Posterior vena cava (tissue), 2 donors: ENCODE measurements at regions of chr11 and their contacts with region 1.

Region 1: GRCh38 chr11:84524422-84525051 is 1102.6 kb downstream of the DLG2 start:
- DNase-seq: no peak

Region 2: GRCh38 chr11:83836883-83837654 is 687.5 kb before region 1 on chr11:
- intact Hi-C with region 1: loop called (anchors 10 kb)
- DNase-seq: no peak

Region 3: GRCh38 chr11:84384731-84385130 is 139.8 kb before region 1 on chr11:
- intact Hi-C with region 1: loop called in 1 of 2 experiments (anchors 10 kb)
- DNase-seq: no peak